ENCODE measurements at regions of chr13 and their contacts with region 1.

Region 1: DNA sequence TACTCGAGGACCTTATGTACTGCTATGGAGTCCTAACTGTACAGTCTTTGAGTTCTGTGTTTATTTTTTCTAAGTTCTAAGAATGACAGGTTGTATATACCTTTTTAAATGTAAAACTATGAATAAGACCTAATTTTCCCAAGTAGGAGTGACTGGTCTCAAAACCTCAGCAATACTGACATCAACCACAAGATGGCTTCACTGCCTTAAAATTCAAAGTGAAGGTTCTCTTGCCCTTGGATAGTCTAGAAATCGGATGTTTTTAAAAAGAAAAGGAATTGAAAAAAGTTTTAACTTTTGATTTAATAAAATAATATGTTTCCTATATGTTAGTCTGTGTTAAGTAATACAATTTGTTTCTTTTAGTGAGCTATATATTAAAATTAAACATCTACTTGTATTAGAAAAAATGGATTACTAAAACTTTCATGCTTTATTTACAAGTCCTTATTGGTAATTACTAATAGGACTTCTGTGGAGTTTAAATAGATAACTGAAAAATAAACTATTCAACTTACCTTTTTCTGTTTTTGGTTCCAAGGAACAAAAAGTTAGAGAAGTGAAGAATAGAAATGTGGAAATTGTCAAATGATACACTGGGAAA is 52.0 kb downstream of the TDRD3 start:
- DNase-seq: peak; percentile 11
- H3K4me3 ChIP-seq: no peak overlapping the region
- H3K27me3 ChIP-seq: no peaks in the 10 kb centered on the region
- CTCF ChIP-seq: peak; percentile 81

Region 2: GRCh38 chr13:60351326-60351725 is 97.7 kb before region 1 on chr13:
- CTCF ChIA-PET with region 1: no interaction called
- POLR2A ChIA-PET with region 1: no interaction called
- DNase-seq: no peak
- H3K4me3 ChIP-seq: no peak overlapping the region
- H3K27me3 ChIP-seq: peaks cover 3% of the 10 kb centered on the region; the same call in 1 of the 2 replicates
- CTCF ChIP-seq: no peak

Region 3: DNA sequence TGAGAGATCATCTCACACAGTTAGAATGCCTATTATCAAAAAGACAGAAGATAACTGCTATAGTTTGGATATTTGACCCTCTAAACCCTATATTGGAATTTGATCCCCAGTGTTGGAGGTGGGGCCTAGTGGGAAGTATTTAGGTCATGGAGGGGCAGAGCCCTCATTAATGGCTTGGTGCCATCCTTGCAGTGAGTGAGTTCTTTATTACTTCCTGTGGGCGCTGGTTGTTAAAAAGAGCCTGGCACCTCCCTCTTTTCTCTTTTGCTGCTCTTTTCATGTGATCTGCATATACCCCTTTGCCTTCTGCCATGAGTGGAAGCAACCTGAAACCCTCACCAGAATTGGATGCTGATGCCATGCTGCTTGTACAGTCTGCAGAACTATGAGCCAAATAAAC is 14.8 kb after region 1 on chr13:
- CTCF ChIA-PET with region 1: interaction called, 13 read pairs
- POLR2A ChIA-PET with region 1: no interaction called
- DNase-seq: no peak
- H3K4me3 ChIP-seq: no peak overlapping the region
- H3K27me3 ChIP-seq: no peaks in the 10 kb centered on the region
- CTCF ChIP-seq: no peak

Region 4: GRCh38 chr13:61410669-61411297 is 961.8 kb after region 1 on chr13:
- CTCF ChIA-PET with region 1: interaction called, 13 read pairs
- POLR2A ChIA-PET with region 1: no interaction called
- DNase-seq: no peak
- H3K4me3 ChIP-seq: no peak overlapping the region
- H3K27me3 ChIP-seq: no peaks in the 10 kb centered on the region
- CTCF ChIP-seq: peak; percentile 39